AG04449 (cell line): ENCODE measurements at regions of chr6 and their contacts with region 1.

Region 1: DNA sequence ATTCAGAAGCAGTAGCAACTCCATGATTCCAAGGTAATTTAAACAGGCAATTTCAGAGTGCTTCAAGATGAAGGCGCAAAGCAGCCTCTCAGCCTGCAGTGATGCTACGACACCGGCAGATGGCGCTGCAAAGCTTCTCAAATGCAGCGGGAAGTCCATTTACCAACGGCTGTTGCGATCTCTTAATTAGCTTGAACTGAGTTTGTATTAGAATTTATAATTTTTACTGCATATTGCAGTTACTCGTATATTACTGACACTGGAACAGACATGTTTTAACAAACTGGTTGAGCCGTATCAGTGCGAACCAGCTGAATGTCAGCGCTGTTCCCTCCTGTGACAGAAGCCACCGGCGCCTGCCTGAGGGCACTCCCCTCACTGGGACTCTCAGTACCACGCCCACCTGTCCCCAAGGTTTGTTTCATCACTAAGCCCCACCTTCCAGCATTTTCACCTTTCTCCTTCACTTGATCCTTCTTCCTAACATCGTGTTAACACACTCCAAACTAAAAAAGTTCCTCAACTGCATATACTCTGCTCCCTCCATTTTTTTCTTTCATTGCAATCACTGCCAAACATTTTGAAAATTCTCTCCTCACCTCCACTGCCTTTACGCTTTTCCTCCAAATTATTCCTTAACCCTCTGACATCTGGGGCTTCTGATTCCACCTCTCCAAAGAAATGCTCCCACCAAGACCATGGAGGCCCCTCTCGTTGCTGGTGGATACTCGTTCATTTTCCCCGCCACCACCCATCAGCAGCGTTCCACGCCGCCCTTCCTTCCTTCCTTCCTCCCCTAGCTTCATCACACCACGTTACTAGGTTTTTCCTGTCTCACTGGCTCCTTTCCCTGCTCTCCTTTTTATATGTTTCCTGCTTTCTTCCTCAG is 14.5 kb downstream of the GNL1 start:
- DNase-seq: no peak
- H3K4me3 ChIP-seq: peak overlapping the region; percentile 31
- CTCF ChIP-seq: peak; percentile 90

Region 2: DNA sequence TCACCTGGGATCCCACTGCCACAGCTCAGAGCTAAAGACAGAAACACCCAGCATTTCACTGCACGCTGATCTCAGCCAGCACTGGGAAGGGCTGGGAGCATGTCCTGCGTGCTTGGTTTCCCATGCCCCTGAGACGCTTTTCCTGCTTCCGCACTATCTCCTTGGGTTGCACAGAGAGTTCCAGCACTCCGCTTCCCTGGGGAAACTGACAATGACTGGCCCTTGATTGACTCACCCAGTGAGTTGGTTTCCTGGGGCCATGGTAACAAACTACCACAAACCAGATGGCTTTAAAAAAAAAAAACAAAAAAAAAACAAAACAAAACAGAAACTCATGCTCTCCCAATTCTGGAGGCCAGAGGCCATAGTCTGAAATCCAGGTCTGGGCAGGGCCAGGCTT is 1039.2 kb before region 1 on chr6:
- CTCF ChIA-PET with region 1: no interaction called
- POLR2A ChIA-PET with region 1: no interaction called
- DNase-seq: no peak
- H3K4me3 ChIP-seq: no peak overlapping the region
- CTCF ChIP-seq: no peak

Region 3: DNA sequence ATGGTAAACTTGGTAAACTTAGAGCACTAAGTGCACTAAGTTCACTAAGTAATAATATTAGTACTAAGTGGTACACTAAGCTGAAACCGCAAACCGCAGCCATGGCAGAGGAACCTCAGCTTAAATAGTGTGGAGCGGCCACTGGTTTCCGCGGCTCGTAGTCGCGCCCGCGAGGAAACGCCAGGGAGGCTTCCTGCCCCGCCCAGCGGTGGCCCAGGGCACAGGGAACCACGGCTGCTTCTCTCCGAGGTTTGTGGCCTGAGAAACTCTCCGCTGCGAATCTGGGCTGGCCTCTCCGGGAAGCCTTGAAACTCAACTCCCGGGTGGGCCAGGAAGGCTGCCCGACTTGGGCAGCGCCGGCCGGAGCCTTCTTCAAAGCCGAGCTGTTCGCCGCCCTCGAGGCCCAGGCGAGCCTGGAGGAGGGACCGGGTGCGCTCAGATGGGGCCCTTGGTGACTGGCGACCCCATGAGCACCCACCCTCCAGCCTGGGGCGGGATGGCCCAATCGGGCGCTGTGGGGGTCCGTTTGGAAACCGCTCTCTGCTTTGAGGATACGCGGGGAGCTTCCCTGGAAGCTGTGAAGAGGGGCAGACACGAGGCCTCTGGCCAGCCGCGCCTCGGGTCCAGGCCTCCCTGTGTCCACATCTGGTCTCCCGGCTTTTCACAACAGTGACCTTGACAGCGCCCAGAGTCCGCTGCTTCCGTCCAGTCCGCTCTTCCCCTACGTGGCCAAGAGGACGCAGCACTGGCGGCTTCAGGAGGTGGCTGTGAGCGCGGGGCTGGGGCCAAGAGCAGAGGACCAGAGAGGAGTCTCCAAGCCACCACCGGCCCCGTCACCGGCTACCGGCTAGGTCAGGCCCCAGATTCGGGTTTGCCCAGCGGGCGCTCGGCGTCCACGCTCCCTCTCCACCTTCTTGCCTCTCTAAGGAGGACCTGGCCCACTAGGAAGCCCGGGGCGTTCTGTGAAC is 77.8 kb before region 1 on chr6:
- CTCF ChIA-PET with region 1: interaction called, 12 read pairs
- POLR2A ChIA-PET with region 1: no interaction called
- DNase-seq: no peak
- H3K4me3 ChIP-seq: no peak overlapping the region
- CTCF ChIP-seq: no peak

Region 4: DNA sequence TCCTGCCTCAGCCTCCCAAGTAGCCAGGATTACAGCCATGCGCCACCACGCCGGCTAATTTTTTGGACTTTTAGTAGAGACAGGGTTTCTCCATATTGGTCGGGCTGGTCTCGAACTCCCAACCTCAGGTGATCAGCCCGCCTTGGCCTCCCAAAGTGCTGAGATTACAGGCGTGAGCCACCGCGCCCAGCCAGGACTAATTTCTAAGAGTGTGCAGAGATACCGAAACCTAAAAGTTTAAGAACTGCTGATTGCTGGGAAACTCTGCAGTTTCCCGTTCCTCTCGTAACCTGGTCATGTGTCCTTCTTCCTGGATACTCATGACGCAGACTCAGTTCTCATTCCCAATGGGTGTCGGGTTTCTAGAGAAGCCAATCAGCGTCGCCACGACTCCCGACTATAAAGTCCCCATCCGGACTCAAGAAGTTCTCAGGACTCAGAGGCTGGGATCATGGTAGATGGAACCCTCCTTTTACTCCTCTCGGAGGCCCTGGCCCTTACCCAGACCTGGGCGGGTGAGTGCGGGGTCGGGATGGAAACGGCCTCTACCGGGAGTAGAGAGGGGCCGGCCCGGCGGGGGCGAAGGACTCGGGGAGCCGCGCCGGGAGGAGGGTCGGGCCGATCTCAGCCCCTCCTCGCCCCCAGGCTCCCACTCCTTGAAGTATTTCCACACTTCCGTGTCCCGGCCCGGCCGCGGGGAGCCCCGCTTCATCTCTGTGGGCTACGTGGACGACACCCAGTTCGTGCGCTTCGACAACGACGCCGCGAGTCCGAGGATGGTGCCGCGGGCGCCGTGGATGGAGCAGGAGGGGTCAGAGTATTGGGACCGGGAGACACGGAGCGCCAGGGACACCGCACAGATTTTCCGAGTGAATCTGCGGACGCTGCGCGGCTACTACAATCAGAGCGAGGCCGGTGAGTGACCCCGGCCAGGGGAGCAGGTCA is 52.4 kb before region 1 on chr6 and contains the start of gene HLA-E:
- CTCF ChIA-PET with region 1: interaction called, 788 read pairs
- POLR2A ChIA-PET with region 1: no interaction called
- DNase-seq: peak; percentile 97
- H3K4me3 ChIP-seq: peak within 1 kb of the TSS; percentile 82
- CTCF ChIP-seq: no peak

Region 5: DNA sequence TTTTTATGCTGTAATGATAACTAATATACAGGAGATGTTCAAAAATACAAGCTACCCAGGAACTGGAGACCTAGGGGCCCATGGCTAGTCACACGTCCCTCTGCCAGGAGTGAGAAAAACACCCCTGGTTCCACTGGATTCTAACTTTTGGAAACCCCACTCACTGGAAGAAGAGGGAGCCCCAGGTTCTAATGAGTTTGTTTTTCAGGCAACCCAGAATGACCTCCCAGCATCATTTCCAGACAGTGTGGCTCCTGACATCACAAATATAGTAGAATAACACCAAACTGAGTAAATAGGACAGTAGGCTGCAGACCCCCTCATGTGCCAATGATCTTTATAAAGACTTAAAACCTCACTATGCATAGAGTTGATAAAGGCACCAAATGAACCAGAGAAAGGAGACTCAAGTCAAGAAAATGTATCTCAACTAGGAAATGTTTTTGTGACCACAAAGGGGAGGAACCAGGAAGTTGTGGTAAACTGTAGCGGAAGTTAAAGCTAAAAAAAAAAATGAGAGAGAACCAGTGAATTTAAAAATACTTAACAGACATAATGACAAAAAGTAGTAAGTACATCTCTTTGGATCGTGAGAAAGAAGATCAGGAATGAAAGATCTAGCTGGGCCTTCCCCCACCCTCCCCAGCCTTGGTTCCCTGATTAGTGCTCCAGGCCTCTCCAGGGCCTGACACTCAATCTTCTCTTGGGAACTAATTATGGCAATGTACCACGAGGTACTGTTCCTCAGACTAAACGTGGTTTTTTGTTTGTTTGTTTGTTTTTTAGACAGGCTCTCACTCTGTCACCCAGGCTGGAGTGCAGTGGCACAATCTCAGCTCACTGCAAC is 32.6 kb before region 1 on chr6:
- CTCF ChIA-PET with region 1: interaction called, 69 read pairs
- POLR2A ChIA-PET with region 1: no interaction called
- DNase-seq: no peak
- H3K4me3 ChIP-seq: no peak overlapping the region
- CTCF ChIP-seq: no peak

Region 6: DNA sequence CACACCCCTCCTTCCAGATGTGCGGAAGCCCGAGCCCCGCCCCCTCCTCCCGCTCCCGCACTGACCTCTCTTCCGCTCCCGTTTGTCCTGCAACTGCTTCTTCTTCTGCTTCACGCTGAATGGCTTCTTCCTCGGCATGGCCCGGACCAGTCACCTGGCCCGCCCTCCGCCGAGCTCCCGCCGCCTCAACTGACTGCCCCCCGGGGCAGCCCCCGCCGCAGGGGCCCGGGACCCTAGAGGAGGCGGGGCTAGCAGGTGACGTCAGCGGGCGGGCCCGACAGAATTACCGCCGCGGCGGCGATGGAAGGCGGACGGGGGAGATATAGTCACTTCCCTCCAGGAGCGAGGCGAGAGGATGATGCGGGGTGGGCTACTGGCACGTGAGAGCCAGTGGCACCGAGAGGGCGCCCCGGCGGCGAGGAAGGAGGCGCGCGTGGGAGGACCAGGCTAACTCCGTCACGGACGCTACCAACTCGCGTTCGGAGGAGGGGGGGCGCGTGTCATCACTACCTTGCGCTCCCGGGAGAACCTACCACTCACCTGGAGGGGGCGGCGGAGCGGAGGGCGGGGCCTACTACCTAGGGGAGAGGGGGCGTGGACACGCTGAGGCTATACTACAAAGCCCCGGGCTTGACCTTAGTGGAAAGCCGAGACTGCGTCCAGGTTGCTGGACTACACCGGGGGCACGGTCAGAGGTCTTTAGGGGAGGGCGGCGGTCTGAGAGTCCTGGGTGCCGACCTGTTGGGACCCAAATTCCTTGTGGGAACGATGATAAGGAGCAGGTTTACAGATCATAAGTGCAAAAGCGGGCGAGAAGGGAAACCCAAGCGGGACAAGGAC is 14.5 kb after region 1 on chr6 and contains the start of gene GNL1:
- CTCF ChIA-PET with region 1: interaction called, 269 read pairs
- POLR2A ChIA-PET with region 1: interaction called, 3 read pairs
- DNase-seq: peak; percentile 47
- H3K4me3 ChIP-seq: peak within 1 kb of the TSS; percentile 100
- CTCF ChIP-seq: no peak

Region 7: DNA sequence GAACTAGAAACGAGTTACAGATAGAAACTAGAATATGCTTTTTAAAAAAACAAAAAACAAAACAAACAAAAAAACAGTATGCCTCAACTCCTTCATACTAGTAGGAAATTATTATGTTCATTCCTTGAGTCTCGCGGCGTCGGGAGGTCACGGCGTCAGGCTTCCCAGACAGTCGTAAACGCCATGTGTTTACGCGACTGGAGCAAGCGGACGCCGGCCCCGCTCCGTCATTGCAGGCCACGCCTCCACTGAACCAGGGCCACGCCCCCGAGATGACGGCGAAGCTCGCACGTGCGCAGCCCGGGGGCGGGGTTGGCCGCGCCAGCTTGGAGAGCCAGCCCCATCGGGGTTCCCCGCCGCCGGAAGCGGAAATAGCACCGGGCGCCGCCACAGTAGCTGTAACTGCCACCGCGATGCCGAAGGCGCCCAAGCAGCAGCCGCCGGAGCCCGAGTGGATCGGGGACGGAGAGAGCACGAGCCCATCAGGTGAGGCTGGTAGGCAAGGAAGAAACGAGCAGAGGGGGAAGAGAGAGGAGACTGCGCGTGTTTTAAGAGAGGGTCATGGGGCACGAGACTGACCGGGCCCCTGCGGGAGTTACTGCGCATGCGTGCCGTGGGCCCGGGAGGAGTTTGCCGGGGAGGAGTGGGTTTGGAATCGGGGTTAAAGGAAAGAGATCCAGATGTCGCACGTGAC is 29.5 kb after region 1 on chr6 and contains the start of gene ABCF1:
- CTCF ChIA-PET with region 1: interaction called, 73 read pairs
- POLR2A ChIA-PET with region 1: no interaction called
- DNase-seq: peak; percentile 56
- H3K4me3 ChIP-seq: peak within 1 kb of the TSS; percentile 98
- CTCF ChIP-seq: no peak

Region 8: GRCh38 chr6:31087494-31088089 is 545.8 kb after region 1 on chr6:
- CTCF ChIA-PET with region 1: interaction called, 11 read pairs
- POLR2A ChIA-PET with region 1: no interaction called
- DNase-seq: peak; percentile 23
- H3K4me3 ChIP-seq: no peak overlapping the region
- CTCF ChIP-seq: peak; percentile 77